Testis (tissue), 5 donors: ENCODE measurements at regions of chr16 and their contacts with region 1.

Region 1: GRCh38 chr16:69861292-69862030 is 89.7 kb upstream of the CLEC18A start:
- DNase-seq: peak; percentile 83
- H3K4me3 ChIP-seq: no peak overlapping the region
- H3K27ac ChIP-seq: peak overlapping the region; percentile 42 to 70
- H3K4me1 ChIP-seq: peaks cover 25% of the 10 kb centered on the region
- H3K27me3 ChIP-seq: no peaks in the 10 kb centered on the region
- CTCF ChIP-seq: no peak
- POLR2A ChIP-seq: no peak

Region 2: DNA sequence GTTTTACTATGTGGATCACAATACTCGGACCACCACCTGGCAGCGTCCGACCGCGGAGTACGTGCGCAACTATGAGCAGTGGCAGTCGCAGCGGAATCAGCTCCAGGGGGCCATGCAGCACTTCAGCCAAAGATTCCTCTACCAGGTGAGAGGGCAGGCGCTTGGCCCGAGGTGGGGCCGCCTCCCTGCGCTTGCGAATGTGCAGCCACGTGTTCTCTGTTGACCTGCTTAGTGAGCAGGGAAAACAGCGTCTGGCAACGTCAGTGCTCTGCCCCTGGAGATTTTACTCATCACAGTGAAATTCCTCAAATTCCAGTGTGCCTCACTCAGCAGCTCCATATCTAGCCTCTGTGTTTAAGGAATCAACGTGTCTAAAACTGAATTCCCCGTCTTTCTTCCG is 56.3 kb after region 1 on chr16:
- intact Hi-C with region 1: loop called (anchors 10 kb)
- DNase-seq: peak; percentile 89
- H3K4me3 ChIP-seq: no peak overlapping the region
- H3K27ac ChIP-seq: peak overlapping the region; percentile 51 to 74
- H3K4me1 ChIP-seq: peaks cover 20% of the 10 kb centered on the region
- H3K27me3 ChIP-seq: no peaks in the 10 kb centered on the region
- CTCF ChIP-seq: no peak
- POLR2A ChIP-seq: no peak